ENCODE measurements at regions of chr11 and their contacts with region 1.

Region 1: GRCh38 chr11:1410366-1411291 is 20.9 kb downstream of the BRSK2 start:
- DNase-seq: no peak
- ATAC-seq: peak in 1 of 8 donors; percentile 13
- H3K4me3 ChIP-seq: no peak overlapping the region
- H3K27ac ChIP-seq: no peak overlapping the region
- H3K4me1 ChIP-seq: no peaks in the 10 kb centered on the region
- H3K27me3 ChIP-seq: peaks cover 0 to 18% (median 5%) of the 10 kb centered on the region in 7 donors
- CTCF ChIP-seq: no peak

Region 2: GRCh38 chr11:1271002-1271401 is 139.6 kb before region 1 on chr11:
- intact Hi-C with region 1: loop called in 1 of 10 experiments (anchors 10 kb)
- DNase-seq: no peak
- ATAC-seq: peak in 1 of 8 donors; percentile 34
- H3K4me3 ChIP-seq: no peak overlapping the region
- H3K27ac ChIP-seq: no peak overlapping the region
- H3K4me1 ChIP-seq: peaks cover 0 to 12% (median 2%) of the 10 kb centered on the region in 9 donors
- H3K27me3 ChIP-seq: no peaks in the 10 kb centered on the region
- CTCF ChIP-seq: no peak

Region 3: GRCh38 chr11:1674173-1675131 is 263.8 kb after region 1 on chr11:
- intact Hi-C with region 1: no loop called
- DNase-seq: no peak
- ATAC-seq: no peak
- H3K4me3 ChIP-seq: no peak overlapping the region
- H3K27ac ChIP-seq: no peak overlapping the region
- H3K4me1 ChIP-seq: peaks cover 0 to 8% (median 0%) of the 10 kb centered on the region in 9 donors
- H3K27me3 ChIP-seq: peaks cover 0 to 57% (median 40%) of the 10 kb centered on the region in 7 donors
- CTCF ChIP-seq: no peak